MCF 10A (cell line): ENCODE measurements at regions of chr1 and their contacts with region 1.

Region 1: DNA sequence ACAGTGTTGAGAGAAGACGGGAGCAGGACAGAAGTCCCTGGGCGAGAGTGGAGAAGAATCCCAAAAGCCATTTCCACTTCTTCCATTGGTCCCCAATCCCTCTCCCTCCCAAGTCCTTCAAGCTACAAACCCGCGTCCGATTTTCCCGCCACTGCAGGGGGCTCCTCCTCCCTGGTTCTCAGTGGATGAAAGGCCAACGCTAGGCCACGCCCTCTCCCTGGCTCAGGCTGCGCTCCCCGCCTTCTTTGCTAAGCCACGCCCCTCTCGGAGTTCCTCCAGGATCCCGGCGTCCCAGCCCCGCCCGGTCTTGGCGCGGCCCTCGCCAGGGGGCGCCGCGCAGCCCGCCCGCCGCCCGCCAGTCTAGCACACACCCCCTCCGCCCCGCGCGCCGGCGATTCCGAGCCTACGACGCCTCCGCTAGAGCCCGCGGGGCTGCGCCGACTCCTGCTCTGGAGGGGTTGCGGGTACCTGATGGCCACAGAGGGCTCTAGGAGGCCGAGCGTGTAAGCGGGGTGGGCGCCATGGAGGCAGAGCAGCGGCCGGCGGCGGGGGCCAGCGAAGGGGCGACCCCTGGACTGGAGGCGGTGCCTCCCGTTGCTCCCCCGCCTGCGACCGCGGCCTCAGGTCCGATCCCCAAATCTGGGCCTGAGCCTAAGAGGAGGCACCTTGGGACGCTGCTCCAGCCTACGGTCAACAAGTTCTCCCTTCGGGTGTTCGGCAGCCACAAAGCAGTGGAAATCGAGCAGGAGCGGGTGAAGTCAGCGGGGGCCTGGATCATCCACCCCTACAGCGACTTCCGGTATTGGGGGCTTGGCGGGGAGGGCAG is at the start of gene HCN3:
- DNase-seq: peak; percentile 98
- H3K4me3 Mint-ChIP-seq: peak within 1 kb of the TSS; percentile 72
- H3K27ac Mint-ChIP-seq: no peak within 1 kb of the TSS
- H3K4me1 Mint-ChIP-seq: peaks cover 18% of the 10 kb centered on the region
- H3K27me3 Mint-ChIP-seq: no peaks in the 10 kb centered on the region
- CTCF ChIP-seq: peak; percentile 90
- total RNA-seq, gene HCN3: 2.5 and 4.3 TPM in 2 replicates

Region 2: DNA sequence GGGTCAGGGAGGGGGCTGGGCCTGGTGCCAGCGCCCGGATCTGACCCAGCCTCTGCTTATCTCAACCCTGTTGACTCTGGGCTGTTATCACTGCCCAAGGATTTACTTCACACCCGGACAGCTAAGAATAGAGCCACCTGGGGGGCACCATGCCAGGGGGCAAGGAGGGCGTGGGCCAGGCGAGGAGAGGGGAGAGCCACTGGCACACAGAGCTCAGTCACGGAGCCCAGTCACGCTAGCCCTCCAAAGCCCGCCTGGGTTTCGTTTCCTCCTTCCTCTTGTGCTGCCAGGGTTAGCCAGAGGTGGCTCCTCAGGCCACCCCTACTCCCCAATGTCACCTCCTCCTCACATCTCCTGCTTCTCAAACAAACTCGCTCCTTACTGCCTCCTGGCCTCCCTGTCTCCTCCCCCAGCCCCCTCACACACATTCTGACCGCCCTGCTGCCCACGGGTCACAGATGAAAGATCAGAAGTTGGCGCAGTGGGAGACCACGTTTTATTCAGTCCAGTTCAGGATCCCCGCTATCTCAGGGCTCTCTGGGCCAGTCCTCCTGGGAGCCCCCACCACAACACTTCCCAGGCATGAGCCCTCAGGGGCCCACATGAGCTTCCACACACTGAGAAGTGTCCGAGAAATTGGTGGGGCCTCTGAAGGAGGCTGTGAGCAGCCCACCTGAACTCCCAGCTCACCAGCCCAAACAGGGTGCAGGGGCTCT is 91.8 kb before region 1 on chr1:
- CTCF ChIA-PET with region 1: no interaction called
- POLR2A ChIA-PET with region 1: no interaction called
- intact Hi-C with region 1: no loop called
- DNase-seq: no peak
- H3K4me3 Mint-ChIP-seq: no peak overlapping the region
- H3K27ac Mint-ChIP-seq: no peak overlapping the region
- H3K4me1 Mint-ChIP-seq: peaks cover 21% of the 10 kb centered on the region
- H3K27me3 Mint-ChIP-seq: no peaks in the 10 kb centered on the region
- CTCF ChIP-seq: no peak

Region 3: DNA sequence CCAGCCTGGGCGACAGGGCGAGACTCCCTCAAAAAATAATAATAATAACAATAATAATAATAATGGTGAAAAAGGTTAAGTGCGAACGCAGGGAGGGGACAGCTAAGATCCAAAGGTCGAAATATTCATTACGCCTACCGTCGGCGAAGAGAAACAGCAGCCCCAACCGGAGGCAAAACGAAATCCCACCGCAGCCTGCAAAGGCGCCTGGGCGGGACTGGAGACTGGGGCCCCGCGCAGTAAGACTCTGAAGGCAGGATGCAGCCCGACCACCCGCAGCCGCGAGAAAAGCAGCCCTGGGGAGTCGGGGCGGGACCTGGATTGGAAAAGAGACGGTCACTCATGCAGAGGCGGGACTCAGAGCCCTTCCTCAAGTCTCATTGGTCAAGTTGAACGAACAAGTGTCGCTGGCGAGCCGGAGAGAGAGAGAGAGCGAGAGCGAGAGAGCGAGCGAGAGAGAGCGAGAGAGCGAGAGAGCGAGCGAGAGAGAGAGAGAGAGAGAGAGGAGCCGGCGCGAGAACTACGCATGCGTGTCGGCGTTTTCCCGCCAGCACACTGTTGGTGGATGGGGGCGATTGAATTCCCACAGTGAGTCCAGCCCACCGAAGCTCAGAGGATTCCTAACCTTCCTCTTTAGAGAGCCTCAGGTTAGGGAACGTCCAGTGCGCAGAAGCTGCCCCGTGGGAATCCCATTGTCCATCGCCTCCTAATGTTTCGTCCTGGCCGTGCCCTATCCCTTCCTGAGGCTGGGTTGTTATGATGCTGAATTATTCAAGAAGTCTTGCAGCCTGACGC is 32.7 kb before region 1 on chr1:
- CTCF ChIA-PET with region 1: interaction called, 238 read pairs
- POLR2A ChIA-PET with region 1: interaction called, 11 read pairs
- intact Hi-C with region 1: no loop called
- DNase-seq: peak; percentile 100
- H3K4me3 Mint-ChIP-seq: peak overlapping the region; percentile 70
- H3K27ac Mint-ChIP-seq: peak overlapping the region; percentile 29
- H3K4me1 Mint-ChIP-seq: peaks cover 24% of the 10 kb centered on the region
- H3K27me3 Mint-ChIP-seq: no peaks in the 10 kb centered on the region
- CTCF ChIP-seq: peak; percentile 38

Region 4: DNA sequence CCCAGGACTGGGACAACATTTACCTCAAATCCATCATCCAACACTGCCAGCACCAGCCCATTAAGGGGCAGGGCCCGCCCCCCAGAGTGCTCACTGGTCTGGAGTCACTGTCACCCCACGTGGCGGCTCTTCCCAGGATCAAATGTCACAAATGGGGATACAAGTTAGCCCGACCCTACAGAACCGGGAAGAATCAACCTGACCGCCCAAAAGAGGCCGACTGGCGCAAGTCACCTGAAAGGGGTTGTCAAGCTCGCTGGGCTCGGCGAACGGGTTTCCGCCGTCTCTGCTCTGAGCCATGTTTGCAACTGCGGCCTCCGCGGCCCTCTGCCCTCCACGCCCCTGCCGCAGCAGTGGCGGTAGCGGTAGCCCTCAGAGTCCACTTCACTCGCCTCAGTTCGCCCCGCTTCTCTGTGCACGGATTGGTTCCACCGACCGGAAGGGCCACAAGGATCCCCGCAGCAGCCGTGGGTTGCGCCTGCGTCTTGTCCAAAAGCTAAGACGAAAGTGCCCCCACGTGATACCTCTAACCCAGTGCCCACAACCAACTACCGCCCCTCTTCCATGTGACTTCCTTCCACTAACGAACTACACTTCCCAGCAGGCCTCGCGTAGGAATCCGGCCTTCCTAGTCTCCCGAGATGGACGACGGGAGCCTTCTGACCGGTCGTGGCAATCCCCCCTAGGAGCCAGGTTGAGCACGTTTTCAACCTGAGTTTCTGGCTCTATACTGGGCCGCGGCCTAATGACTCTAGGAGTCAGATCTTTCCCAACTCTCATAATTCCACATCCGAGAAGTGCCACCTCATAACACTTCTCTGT is 15.2 kb before region 1 on chr1 and contains the start of gene SCAMP3:
- CTCF ChIA-PET with region 1: interaction called, 13 read pairs
- POLR2A ChIA-PET with region 1: interaction called, 98 read pairs
- intact Hi-C with region 1: no loop called
- DNase-seq: peak; percentile 100
- H3K4me3 Mint-ChIP-seq: peak within 1 kb of the TSS; percentile 98
- H3K27ac Mint-ChIP-seq: peak within 1 kb of the TSS; percentile 96
- H3K4me1 Mint-ChIP-seq: peaks cover 18% of the 10 kb centered on the region
- H3K27me3 Mint-ChIP-seq: no peaks in the 10 kb centered on the region
- CTCF ChIP-seq: no peak
- total RNA-seq, gene SCAMP3: 80.6 and 88.1 TPM in 2 replicates

Region 5: GRCh38 chr1:155308493-155309422 is 31.5 kb after region 1 on chr1 and contains the start of gene FDPS:
- CTCF ChIA-PET with region 1: interaction called, 12 read pairs
- POLR2A ChIA-PET with region 1: interaction called, 13 read pairs
- intact Hi-C with region 1: loop called (anchors 1 kb)
- DNase-seq: peak; percentile 100
- H3K4me3 Mint-ChIP-seq: peak within 1 kb of the TSS; percentile 100
- H3K27ac Mint-ChIP-seq: peak within 1 kb of the TSS; percentile 97
- H3K4me1 Mint-ChIP-seq: peaks cover 13% of the 10 kb centered on the region
- H3K27me3 Mint-ChIP-seq: no peaks in the 10 kb centered on the region
- CTCF ChIP-seq: no peak
- total RNA-seq, gene FDPS: 176 and 264 TPM in 2 replicates

Region 6: DNA sequence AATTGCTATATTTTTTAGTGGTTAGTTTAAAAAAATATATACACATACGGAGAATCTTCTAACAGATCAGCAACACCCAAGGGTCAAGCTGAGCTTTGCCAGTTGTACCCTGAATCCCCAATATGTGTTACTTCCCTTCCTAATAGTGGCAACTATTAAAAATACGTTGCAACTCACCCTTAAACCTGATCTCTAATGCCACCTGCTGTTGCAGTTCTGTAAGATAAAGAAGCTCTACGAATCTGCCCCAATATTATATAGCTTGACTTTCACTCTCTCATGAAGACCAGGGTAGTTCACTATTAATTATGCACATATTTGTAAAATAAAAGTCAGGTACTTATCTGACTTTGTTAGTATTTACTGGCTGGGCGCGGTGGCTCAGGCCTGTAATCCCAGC is 226.9 kb after region 1 on chr1:
- CTCF ChIA-PET with region 1: interaction called, 4 read pairs
- POLR2A ChIA-PET with region 1: no interaction called
- intact Hi-C with region 1: loop called (anchors 1 kb)
- DNase-seq: peak; percentile 63
- H3K4me3 Mint-ChIP-seq: no peak overlapping the region
- H3K27ac Mint-ChIP-seq: no peak overlapping the region
- H3K4me1 Mint-ChIP-seq: peaks cover 33% of the 10 kb centered on the region
- H3K27me3 Mint-ChIP-seq: no peaks in the 10 kb centered on the region
- CTCF ChIP-seq: peak; percentile 61

Region 7: GRCh38 chr1:155591770-155592169 is 314.5 kb after region 1 on chr1:
- CTCF ChIA-PET with region 1: interaction called, 3 read pairs
- POLR2A ChIA-PET with region 1: no interaction called
- intact Hi-C with region 1: loop called (anchors 2 kb)
- DNase-seq: peak; percentile 78
- H3K4me3 Mint-ChIP-seq: no peak overlapping the region
- H3K27ac Mint-ChIP-seq: no peak overlapping the region
- H3K4me1 Mint-ChIP-seq: no peaks in the 10 kb centered on the region
- H3K27me3 Mint-ChIP-seq: no peaks in the 10 kb centered on the region
- CTCF ChIP-seq: peak; percentile 80

Region 8: GRCh38 chr1:155648551-155649147 is 371.4 kb after region 1 on chr1:
- CTCF ChIA-PET with region 1: interaction called, 3 read pairs
- POLR2A ChIA-PET with region 1: interaction called, 5 read pairs
- intact Hi-C with region 1: loop called (anchors 1 kb)
- DNase-seq: peak; percentile 97
- H3K4me3 Mint-ChIP-seq: peak overlapping the region; percentile 73
- H3K27ac Mint-ChIP-seq: peak overlapping the region; percentile 47
- H3K4me1 Mint-ChIP-seq: peaks cover 53% of the 10 kb centered on the region
- H3K27me3 Mint-ChIP-seq: no peaks in the 10 kb centered on the region
- CTCF ChIP-seq: peak; percentile 61